ENCODE measurements at regions of chr3 and their contacts with region 1.

Region 1: GRCh38 chr3:50519471-50520089 is 16.1 kb upstream of the CACNA2D2 start:
- DNase-seq: peak; percentile 72 to 84
- ATAC-seq: peak; percentile 66 to 87 (median 81)
- H3K4me3 ChIP-seq: no peak overlapping the region
- H3K4me3 Mint-ChIP-seq: no peak overlapping the region
- H3K27ac ChIP-seq: no peak overlapping the region
- H3K27ac Mint-ChIP-seq: no peak overlapping the region
- H3K4me1 ChIP-seq: peaks cover 23% of the 10 kb centered on the region
- H3K4me1 Mint-ChIP-seq: peaks cover 25 to 31% of the 10 kb centered on the region in 2 donors
- H3K27me3 ChIP-seq: no peaks in the 10 kb centered on the region
- H3K27me3 Mint-ChIP-seq: no peaks in the 10 kb centered on the region
- CTCF ChIP-seq: peak; percentile 89

Region 2: GRCh38 chr3:50550079-50550741 is 30.6 kb after region 1 on chr3:
- intact Hi-C with region 1: loop called (anchors 2 kb)
- DNase-seq: peak; percentile 75 to 79
- ATAC-seq: peak; percentile 60 to 80 (median 79)
- H3K4me3 ChIP-seq: no peak overlapping the region
- H3K4me3 Mint-ChIP-seq: no peak overlapping the region
- H3K27ac ChIP-seq: no peak overlapping the region
- H3K27ac Mint-ChIP-seq: peak overlapping the region in 1 of 2 donors; percentile 58
- H3K4me1 ChIP-seq: peaks cover 23% of the 10 kb centered on the region
- H3K4me1 Mint-ChIP-seq: peaks cover 9 to 33% of the 10 kb centered on the region in 2 donors
- H3K27me3 ChIP-seq: no peaks in the 10 kb centered on the region
- H3K27me3 Mint-ChIP-seq: no peaks in the 10 kb centered on the region
- CTCF ChIP-seq: peak; percentile 89